HepG2 (cell line): ENCODE measurements at regions of chr7 and their contacts with region 1.

Region 1: DNA sequence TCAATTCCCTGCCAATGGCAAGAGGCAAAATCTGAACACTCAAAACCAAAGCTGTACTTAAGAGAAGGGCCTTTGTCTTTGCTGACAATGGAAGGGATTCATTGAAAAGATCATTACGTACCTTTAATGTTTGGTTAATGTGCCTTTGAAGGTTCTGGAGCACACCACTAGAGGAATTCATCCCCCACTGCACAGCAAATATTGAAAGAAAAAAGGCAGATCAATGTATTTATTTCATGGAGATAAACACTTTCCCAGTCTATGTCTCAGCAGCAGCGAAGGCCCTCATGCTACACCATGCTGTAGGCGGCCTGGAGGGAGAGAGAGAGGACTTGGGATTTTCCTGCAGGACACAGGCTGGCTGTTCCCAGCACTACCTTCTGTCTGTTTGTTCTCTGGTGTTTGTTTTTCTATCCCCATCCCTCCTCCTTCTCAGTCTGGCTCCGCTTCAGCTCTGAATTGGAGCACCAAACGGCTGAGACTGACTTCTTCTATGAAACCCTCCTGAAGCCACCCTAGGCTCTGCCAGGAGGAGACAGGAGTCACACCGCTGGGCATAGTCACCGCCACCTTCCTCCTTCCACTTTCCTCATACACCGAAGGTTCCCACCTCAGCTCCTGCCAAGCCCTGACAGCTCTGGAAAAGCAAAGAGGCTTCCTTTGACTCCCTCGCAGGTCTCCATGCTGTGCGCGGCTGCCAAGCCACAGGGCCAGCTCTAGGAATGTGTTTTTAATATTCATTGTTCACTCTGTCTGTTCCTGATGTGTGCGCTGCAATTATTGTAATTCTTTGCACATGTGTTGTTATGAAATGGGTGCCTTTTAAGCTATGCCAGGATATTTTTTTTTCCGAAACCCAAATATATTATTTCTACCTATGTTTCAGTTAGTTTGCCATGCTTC is 301.5 kb downstream of the FZD1 start:
- DNase-seq: peak; percentile 95
- ATAC-seq: peak; percentile 97
- H3K4me3 ChIP-seq: peak overlapping the region; percentile 22 to 55 (median 28); a peak in 4 of 6 replicates
- H3K27ac ChIP-seq: peak overlapping the region; percentile 68
- H3K4me1 ChIP-seq: peaks cover 63% of the 10 kb centered on the region
- H3K27me3 ChIP-seq: no peaks in the 10 kb centered on the region
- CTCF ChIP-seq: no peak
- EP300 ChIP-seq: peak; percentile 37 to 83; a peak in 2 of 4 replicates
- POLR2A ChIP-seq: 0 out of 4 replicates have a peak, but pooled peaks of 1 of the 2 experiments have one; percentile 23
- RAD21 ChIP-seq: no peak

Region 2: DNA sequence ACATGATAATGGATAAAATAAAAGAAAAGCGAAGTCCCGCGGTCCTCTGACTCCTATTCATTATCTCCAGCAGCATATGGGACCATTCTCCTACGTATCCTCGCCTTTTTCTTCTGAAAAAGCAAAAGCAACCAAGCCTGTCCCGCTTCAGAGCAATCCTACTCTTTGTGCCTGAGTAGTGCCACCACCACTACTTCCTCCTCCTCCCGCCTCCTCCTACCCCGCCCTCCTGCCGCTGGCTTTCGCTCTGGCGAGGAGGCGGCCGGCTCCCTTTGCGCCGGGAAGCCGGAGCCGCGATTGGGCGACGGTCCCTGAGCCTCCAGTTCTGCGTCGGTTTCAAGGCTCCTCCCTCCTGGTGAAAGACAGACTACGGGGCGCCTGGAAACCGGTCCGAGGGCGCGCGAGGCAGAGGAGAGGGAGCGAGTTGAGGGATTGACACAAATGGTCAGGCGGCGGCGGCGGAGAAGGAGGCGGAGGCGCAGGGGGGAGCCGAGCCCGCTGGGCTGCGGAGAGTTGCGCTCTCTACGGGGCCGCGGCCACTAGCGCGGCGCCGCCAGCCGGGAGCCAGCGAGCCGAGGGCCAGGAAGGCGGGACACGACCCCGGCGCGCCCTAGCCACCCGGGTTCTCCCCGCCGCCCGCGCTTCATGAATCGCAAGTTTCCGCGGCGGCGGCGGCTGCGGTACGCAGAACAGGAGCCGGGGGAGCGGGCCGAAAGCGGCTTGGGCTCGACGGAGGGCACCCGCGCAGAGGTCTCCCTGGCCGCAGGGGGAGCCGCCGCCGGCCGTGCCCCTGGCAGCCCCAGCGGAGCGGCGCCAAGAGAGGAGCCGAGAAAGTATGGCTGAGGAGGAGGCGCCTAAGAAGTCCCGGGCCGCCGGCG is 301.5 kb before region 1 on chr7 and contains the start of gene FZD1:
- CTCF ChIA-PET with region 1: no interaction called
- POLR2A ChIA-PET with region 1: no interaction called
- in situ Hi-C with region 1: no loop called
- intact Hi-C with region 1: loop called (anchors 10 kb)
- DNase-seq: peak; percentile 84
- ATAC-seq: peak; percentile 93
- H3K4me3 ChIP-seq: peak within 1 kb of the TSS; percentile 60 to 68 (median 66)
- H3K27ac ChIP-seq: no peak within 1 kb of the TSS
- H3K4me1 ChIP-seq: peaks cover 15% of the 10 kb centered on the region
- H3K27me3 ChIP-seq: peaks cover 0 to 16% of the 10 kb centered on the region in 2 experiments; a peak in 2 of 5 replicates
- CTCF ChIP-seq: no peak
- EP300 ChIP-seq: no peak
- POLR2A ChIP-seq: no peak
- RAD21 ChIP-seq: no peak
- total RNA-seq, gene FZD1: 0.51 and 0.80 TPM in 2 replicates

Region 3: DNA sequence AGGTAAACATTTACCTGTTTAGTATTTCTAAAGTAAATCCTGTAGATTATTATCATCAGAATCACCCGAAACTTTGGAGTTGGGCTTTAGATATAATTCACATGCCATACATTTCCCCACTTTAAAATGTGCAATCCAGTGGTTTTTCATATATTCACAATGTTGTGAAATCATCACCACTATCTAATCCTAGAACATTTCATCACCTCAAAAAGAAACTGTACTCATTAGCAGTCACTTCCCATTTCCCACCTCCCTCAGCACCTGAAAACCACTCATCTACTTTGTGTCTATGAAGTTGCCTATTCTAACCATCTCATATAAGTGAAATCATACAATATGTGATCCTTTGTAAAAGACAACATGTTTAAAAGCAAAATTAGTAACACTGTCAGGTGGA is 118.9 kb before region 1 on chr7:
- CTCF ChIA-PET with region 1: no interaction called
- POLR2A ChIA-PET with region 1: no interaction called
- in situ Hi-C with region 1: no loop called
- intact Hi-C with region 1: no loop called
- DNase-seq: no peak
- ATAC-seq: no peak
- H3K4me3 ChIP-seq: no peak overlapping the region
- H3K27ac ChIP-seq: no peak overlapping the region
- H3K4me1 ChIP-seq: no peaks in the 10 kb centered on the region
- H3K27me3 ChIP-seq: no peaks in the 10 kb centered on the region
- CTCF ChIP-seq: no peak
- EP300 ChIP-seq: no peak
- POLR2A ChIP-seq: no peak
- RAD21 ChIP-seq: no peak